ENCODE measurements at regions of chr3 and their contacts with region 1.

Region 1: DNA sequence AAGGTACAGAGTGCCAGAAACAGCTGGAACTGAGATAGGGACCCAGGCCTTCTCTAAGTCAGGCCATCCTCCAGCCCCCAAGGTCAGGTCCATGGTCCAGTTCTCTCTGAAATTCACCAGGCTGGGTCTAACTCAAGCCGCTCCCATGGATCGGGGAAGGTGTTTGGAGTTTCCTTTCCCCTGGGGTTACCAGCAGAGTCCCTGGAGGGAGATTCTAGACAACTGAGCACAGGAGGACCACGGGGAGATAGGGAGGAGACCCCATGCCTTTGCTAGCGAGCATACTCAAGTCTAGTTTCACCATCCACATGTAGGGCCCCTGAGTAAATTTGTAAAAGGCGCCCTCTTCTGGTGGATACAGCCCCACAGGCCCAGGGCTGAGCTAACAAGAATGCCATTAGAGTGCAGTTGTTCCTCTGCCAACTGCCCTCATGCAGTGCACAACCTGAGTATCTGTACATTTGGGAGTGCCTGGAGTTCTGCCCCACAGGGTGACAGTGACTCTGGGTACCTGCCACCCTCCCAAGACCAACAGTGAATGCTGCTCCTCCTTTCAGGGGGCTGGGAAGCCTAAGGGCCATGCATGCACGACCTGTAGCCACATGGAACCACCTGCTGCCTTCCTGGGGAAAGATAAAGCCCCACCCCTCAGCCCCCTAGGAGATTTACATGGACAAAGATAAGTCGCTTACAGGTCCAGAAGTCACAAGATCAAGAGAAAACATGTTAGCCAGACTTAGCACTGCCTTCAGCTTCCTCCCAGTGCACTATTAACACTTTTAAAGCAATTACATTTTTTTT is 89.0 kb downstream of the IQSEC1 start:
- DNase-seq: peak in 2 of 3 donors; percentile 71 to 80
- ATAC-seq: peak; percentile 79 to 80
- H3K4me3 ChIP-seq: no peak overlapping the region
- H3K27ac ChIP-seq: no peak overlapping the region
- H3K4me1 ChIP-seq: no peaks in the 10 kb centered on the region
- H3K27me3 ChIP-seq: no peaks in the 10 kb centered on the region

Region 2: DNA sequence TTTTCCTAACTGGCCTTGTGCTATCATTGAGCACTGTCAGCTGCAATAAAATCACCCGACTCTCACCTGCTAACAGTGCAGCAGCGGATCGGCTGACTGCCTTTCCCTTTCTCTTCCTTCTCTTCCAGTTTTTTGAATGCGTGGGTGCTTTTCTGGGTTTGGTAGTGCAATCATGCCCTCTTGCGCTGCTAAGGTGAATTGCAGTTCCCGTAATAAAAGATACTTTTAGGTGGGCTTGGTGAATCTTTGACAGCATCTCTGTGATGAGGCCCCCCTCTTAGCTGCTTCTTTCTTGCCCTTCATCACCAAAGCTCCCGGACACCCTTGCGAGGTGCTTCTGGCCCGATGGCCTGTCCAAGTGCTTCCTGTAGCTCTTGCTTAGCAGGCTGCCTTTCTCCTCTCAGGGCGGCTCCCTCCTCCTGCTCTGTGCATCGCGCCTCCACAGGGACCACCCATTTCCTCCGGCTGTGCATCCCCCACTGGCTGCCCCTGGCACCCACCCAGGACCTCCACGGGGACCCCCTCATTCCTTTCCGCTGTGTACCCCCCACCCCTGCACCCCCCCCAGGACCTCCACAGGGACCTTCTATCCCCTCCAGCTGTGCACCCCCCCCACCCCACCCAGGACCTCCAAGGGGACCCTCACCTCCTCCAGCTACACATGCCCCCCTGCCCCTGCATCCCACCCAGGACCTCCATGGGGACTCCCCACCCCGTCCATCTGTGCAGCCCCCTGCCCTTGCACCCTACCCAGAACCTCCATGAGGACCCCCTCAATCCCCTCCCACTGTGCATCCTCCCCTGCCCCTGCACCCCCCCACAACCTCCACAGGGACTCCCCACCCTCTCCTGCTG is 92.0 kb before region 1 on chr3:
- intact Hi-C with region 1: loop called in 3 of 4 experiments (anchors 5 to 10 kb)
- DNase-seq: peak; percentile 25 to 69 (median 56)
- ATAC-seq: peak in 1 of 2 donors; percentile 33
- H3K4me3 ChIP-seq: no peak overlapping the region
- H3K27ac ChIP-seq: no peak overlapping the region
- H3K4me1 ChIP-seq: peaks cover 8% of the 10 kb centered on the region
- H3K27me3 ChIP-seq: no peaks in the 10 kb centered on the region

Region 3: GRCh38 chr3:12934431-12934830 is 49.8 kb before region 1 on chr3:
- intact Hi-C with region 1: loop called in 1 of 4 experiments (anchors 10 kb)
- DNase-seq: peak; percentile 74 to 86 (median 81)
- ATAC-seq: peak; percentile 60 to 71
- H3K4me3 ChIP-seq: no peak overlapping the region
- H3K27ac ChIP-seq: peak overlapping the region; percentile 71
- H3K4me1 ChIP-seq: peaks cover 42% of the 10 kb centered on the region
- H3K27me3 ChIP-seq: no peaks in the 10 kb centered on the region

Region 4: DNA sequence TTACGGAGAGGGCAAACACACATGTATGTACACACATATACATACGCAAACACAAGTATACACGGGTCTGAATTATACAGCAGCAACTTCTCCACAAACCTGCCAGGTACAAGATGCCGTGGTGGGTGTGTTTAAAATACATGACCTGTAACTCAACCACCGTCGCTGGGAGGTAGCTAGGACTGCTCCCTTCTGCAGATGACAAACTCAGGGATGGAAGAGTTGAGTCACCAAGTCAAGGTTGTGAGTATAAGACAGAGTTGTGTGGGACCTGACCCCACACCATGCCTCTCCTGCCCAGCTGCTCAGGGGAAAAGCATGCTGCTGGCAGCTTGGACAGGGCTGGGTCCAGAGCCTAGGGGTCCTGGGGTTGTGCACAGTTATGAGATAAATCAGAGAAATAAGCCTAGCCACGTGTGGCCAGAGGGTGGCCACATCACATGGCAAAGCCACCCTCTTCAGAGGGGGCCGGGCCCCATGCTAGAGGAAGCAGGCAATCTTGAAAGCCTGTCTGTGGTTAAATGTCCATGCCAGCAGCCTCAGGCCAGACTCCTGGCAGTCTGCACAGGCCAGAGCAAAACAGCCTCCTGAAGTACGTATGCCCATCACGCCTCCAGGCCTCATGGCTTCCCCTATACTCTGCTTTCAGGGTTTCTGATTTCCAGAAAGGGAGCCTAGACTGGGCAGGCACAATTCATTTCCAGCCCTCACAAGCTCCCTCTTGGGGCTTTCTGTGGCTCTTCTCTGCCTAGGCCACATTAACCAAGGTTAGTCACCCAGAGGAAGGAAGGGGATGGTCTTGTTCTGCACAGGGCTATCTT is 35.1 kb before region 1 on chr3:
- intact Hi-C with region 1: loop called in 1 of 4 experiments (anchors 5 kb)
- DNase-seq: no peak
- ATAC-seq: no peak
- H3K4me3 ChIP-seq: no peak overlapping the region
- H3K27ac ChIP-seq: no peak overlapping the region
- H3K4me1 ChIP-seq: peaks cover 44% of the 10 kb centered on the region
- H3K27me3 ChIP-seq: no peaks in the 10 kb centered on the region